K562 (cell line): ENCODE measurements at regions of chr7 and their contacts with region 1.

Region 1: DNA sequence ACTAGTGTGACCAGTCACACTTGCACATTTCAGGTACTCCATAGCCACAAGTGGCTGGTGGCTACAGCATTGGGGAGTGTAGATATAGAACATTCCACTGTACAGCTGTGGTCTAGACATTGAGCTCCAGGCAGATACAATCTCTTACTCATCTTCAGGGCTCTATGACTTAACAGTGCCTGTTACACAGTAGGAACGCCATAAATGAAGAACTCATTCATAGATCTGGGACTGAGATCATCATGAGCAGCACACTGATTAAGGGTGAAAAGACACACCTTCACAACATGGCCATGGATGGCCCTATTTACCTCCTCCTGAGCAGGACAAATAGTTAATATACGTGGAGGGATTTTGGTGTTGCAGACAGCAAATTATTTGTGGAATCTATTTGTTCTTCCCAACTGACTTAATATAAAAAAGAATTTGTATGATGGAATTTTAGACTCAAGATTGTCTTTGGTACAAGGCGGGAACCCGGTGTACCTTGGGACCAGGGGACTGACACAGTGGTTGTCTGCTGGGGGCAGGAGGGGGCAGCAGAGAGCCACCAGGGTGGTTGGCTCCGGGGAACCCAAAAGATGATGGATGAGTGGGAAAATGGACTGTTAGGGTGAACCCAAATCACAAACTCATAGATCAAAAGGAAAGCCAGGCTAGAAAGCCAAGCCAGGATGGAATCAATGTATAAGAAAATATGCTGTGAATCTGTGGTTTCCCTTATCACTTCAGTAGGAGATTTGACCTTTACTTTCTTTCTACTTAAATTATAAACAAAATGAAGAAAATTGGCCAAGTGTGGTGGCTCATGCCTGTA is 24.3 kb upstream of the CPA2 start:
- DNase-seq: peak; percentile 66 to 81 (median 76)
- ATAC-seq: peak; percentile 100
- H3K4me3 ChIP-seq: no peak overlapping the region
- H3K27ac ChIP-seq: no peak overlapping the region
- H3K4me1 ChIP-seq: peaks cover 0 to 10% of the 10 kb centered on the region in 2 experiments; a peak in 2 of 5 replicates
- H3K27me3 ChIP-seq: 0 out of 5 replicates have a peak, but pooled peaks cover 0 to 3% of the 10 kb centered on the region in 2 experiments
- CTCF ChIP-seq: peak; percentile 94 to 97 (median 96)
- EP300 ChIP-seq: peak; percentile 48; the same call in 1 of the 2 replicates
- POLR2A ChIP-seq: no peak
- RAD21 ChIP-seq: peak; percentile 73 to 96

Region 2: GRCh38 chr7:130182990-130183389 is 59.4 kb before region 1 on chr7:
- CTCF ChIA-PET with region 1: no interaction called
- POLR2A ChIA-PET with region 1: no interaction called
- in situ Hi-C with region 1: no loop called
- intact Hi-C with region 1: no loop called
- DNase-seq: no peak
- ATAC-seq: no peak
- H3K4me3 ChIP-seq: no peak overlapping the region
- H3K27ac ChIP-seq: no peak overlapping the region
- H3K4me1 ChIP-seq: no peaks in the 10 kb centered on the region
- H3K27me3 ChIP-seq: no peaks in the 10 kb centered on the region
- CTCF ChIP-seq: no peak
- EP300 ChIP-seq: no peak
- POLR2A ChIP-seq: no peak
- RAD21 ChIP-seq: no peak

Region 3: GRCh38 chr7:130231792-130232191 is 10.6 kb before region 1 on chr7:
- CTCF ChIA-PET with region 1: no interaction called
- POLR2A ChIA-PET with region 1: interaction called, 10 read pairs
- in situ Hi-C with region 1: no loop called
- intact Hi-C with region 1: no loop called
- DNase-seq: no peak
- ATAC-seq: no peak
- H3K4me3 ChIP-seq: no peak overlapping the region
- H3K27ac ChIP-seq: no peak overlapping the region
- H3K4me1 ChIP-seq: peaks cover 9 to 16% of the 10 kb centered on the region in 2 experiments
- H3K27me3 ChIP-seq: no peaks in the 10 kb centered on the region
- CTCF ChIP-seq: no peak
- EP300 ChIP-seq: no peak
- POLR2A ChIP-seq: no peak
- RAD21 ChIP-seq: no peak

Region 4: DNA sequence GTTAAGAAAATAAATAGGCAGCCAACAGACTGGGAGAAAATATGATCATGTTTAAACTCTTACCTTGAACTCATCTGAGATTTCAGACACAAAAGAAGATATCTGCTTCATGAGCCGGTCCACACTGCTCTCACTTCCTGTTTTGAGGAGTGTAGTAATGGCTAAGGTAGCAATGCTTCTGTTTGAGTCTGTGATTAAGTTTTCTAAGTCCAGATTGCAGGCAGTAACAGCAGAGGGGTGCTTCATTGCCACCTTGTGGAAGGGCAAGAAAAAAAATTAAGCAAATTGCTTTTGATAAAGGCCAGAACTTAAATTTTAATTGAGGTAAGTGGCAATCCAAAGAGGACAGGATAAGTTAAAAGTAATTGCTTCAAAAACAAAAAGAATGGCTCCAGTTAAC is 318.6 kb after region 1 on chr7:
- CTCF ChIA-PET with region 1: no interaction called
- POLR2A ChIA-PET with region 1: no interaction called
- in situ Hi-C with region 1: no loop called
- intact Hi-C with region 1: loop called (anchors 1 kb)
- DNase-seq: peak in 3 of 4 experiments; percentile 43 to 55 (median 53)
- ATAC-seq: peak; percentile 89
- H3K4me3 ChIP-seq: no peak overlapping the region
- H3K27ac ChIP-seq: no peak overlapping the region
- H3K4me1 ChIP-seq: no peaks in the 10 kb centered on the region
- H3K27me3 ChIP-seq: no peaks in the 10 kb centered on the region
- CTCF ChIP-seq: peak; percentile 46 to 75 (median 53); a peak in 5 of 6 replicates
- EP300 ChIP-seq: no peak
- POLR2A ChIP-seq: no peak
- RAD21 ChIP-seq: peak; percentile 42 to 78; a peak in 3 of 4 replicates

Region 5: GRCh38 chr7:130721486-130722280 is 479.3 kb after region 1 on chr7:
- CTCF ChIA-PET with region 1: interaction called, 3 read pairs
- POLR2A ChIA-PET with region 1: no interaction called
- in situ Hi-C with region 1: no loop called
- intact Hi-C with region 1: loop called (anchors 1 kb)
- DNase-seq: peak; percentile 44 to 86 (median 70)
- ATAC-seq: peak; percentile 100
- H3K4me3 ChIP-seq: no peak overlapping the region
- H3K27ac ChIP-seq: no peak overlapping the region
- H3K4me1 ChIP-seq: no peaks in the 10 kb centered on the region
- H3K27me3 ChIP-seq: peaks cover 13 to 30% of the 10 kb centered on the region in 2 experiments
- CTCF ChIP-seq: peak; percentile 92 to 97 (median 95)
- EP300 ChIP-seq: 0 out of 2 replicates have a peak, but pooled peaks have one; percentile 35
- POLR2A ChIP-seq: no peak
- RAD21 ChIP-seq: peak; percentile 96 to 98

Region 6: DNA sequence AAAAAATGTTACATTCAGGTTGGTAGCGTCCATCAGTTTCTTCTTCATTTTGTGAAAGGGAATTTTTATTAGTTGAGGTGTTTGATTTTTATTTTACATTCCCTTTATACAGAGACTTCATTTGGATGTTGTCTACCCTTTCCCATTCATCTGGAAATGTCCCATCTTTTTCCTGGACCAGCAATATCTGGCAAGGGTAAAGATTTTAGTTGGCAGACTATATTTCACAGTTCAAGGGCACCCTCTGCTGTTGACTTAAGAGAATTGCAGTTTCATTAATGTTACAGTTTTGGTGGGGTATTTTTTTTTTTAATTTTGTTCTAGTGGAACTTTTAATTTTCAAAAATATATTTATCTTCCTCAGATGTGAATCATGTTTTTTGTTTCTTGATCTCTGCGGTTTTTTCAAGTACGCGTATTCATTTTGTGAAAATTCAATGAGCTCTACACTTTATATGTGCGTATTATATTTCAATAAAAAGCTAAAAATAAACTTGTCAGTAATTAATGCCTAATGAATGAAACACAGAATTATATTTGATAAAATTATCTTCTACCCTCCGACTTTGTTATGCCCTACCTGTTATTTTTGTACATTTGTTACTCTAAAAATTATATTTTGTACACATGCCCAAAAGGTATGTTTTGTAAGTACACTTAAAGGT is 589.5 kb after region 1 on chr7:
- CTCF ChIA-PET with region 1: no interaction called
- POLR2A ChIA-PET with region 1: no interaction called
- in situ Hi-C with region 1: no loop called
- intact Hi-C with region 1: loop called (anchors 10 kb)
- DNase-seq: peak; percentile 64 to 65 (median 64)
- ATAC-seq: peak; percentile 64
- H3K4me3 ChIP-seq: no peak overlapping the region
- H3K27ac ChIP-seq: no peak overlapping the region
- H3K4me1 ChIP-seq: no peaks in the 10 kb centered on the region
- H3K27me3 ChIP-seq: peaks cover 8 to 18% of the 10 kb centered on the region in 2 experiments; a peak in 4 of 5 replicates
- CTCF ChIP-seq: peak; percentile 71 to 92 (median 79); a peak in 5 of 6 replicates
- EP300 ChIP-seq: no peak
- POLR2A ChIP-seq: no peak
- RAD21 ChIP-seq: peak; percentile 81 to 83